H1 (cell line): ENCODE measurements at regions of chr14 and their contacts with region 1.

Region 1: DNA sequence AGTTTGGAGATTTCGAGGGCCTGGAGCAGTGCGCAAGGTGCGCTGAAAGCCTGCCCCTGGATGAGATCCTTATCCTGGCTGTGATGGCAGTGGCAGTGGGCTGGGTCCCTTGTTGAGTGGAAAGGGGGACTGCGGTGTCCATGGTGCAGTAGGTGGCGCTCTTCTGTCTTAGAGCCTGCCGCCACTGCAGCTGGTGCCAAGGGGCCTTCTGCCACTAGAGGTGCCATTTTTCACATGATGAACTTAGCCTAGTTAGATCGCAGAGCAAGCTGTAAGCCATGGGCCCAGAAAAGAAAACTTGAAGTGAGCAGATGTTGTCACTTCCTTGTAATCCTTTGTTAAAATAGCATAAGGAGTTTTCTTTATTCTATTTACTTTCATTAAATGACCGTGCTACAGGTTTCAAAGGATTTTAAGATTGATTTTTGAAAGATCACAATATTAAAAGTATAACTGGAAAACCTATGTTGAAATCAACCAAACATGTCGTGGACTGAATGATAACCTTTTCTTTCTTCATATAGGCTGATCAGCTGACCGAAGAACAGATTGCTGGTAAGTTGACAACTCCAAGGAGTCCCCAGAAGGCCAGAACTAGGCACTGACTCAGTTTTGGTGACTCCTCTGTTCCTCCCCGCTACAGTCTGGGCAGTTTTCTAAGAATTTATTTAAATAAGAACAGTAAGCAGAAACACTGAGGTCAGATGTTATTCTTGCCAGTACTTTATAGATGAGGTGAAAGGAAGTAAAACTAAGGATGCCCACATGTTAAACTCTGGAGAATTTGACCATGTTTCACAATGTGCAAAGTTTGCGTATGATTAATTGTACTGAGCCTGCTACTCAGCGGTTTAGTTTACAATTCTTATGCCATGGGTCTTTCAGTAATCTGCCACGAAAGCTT is 3.0 kb downstream of the CALM1 start:
- DNase-seq: peak; percentile 68 to 83
- H3K4me3 ChIP-seq: peak overlapping the region in 1 of 4 experiments; percentile 88; a peak in 2 of 8 replicates
- H3K27ac ChIP-seq: no peak overlapping the region
- H3K4me1 ChIP-seq: peaks cover 0 to 3% (median 1%) of the 10 kb centered on the region in 4 experiments; a peak in 2 of 7 replicates
- H3K27me3 ChIP-seq: no peaks in the 10 kb centered on the region
- CTCF ChIP-seq: peak; percentile 99 to 100 (median 100)
- EP300 ChIP-seq: peak in 1 of 2 experiments; percentile 54; a peak in 1 of 3 replicates
- POLR2A ChIP-seq: no peak
- RAD21 ChIP-seq: peak; percentile 96

Region 2: GRCh38 chr14:90256354-90257131 is 143.2 kb before region 1 on chr14 and contains the start of gene PSMC1:
- CTCF ChIA-PET with region 1: no interaction called
- POLR2A ChIA-PET with region 1: no interaction called
- DNase-seq: peak; percentile 71 to 78
- H3K4me3 ChIP-seq: peak within 1 kb of the TSS; percentile 62 to 94 (median 78)
- H3K27ac ChIP-seq: peak within 1 kb of the TSS; percentile 75; the same call in 1 of the 2 replicates
- H3K4me1 ChIP-seq: peaks cover 0 to 3% (median 0%) of the 10 kb centered on the region in 4 experiments; a peak in 1 of 7 replicates
- H3K27me3 ChIP-seq: peaks cover 0 to 6% (median 3%) of the 10 kb centered on the region in 4 experiments; a peak in 4 of 7 replicates
- CTCF ChIP-seq: no peak
- EP300 ChIP-seq: peak in 1 of 2 experiments; percentile 24; a peak in 1 of 3 replicates
- POLR2A ChIP-seq: peak; percentile 82 to 91
- RAD21 ChIP-seq: no peak; a peak in 1 of 4 replicates
- total RNA-seq, gene PSMC1: 99.6 and 104 TPM in 2 replicates

Region 3: DNA sequence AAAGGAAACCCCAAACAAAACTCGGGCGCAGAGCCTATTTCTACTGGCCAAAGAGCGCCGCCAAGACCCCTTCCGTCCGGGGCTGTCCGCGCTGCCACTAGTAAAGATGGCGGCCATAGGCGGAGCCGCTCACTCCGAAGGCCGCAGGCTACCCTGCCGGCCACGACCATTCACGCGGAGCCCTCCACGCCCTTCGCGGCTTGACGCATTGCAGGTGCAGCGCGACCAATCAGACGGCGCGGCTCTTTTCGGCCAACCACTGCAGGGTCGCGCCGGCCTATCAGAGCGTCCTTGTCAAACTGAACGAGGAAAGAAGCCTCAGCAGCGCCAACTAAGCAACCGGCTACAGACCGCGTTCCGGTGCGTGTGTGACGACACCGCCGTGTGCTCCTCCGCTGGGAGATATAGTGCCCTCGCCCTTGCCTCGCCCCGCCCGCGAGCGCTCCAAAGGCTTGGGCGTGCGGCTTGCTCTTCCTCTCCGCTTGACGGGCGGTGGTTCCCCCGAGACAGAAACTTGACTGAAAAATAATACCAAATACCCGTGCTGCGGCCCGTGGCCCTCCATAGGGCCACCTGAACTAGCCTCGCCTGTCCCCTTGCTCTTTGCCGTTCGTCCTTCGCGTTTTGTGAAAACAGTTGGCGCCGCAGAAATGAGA is 16.6 kb before region 1 on chr14:
- CTCF ChIA-PET with region 1: interaction called, 8 read pairs
- POLR2A ChIA-PET with region 1: interaction called, 104 read pairs
- DNase-seq: peak; percentile 95 to 99
- H3K4me3 ChIP-seq: peak overlapping the region; percentile 60 to 78 (median 74)
- H3K27ac ChIP-seq: peak overlapping the region; percentile 95
- H3K4me1 ChIP-seq: peaks cover 3 to 17% (median 3%) of the 10 kb centered on the region in 4 experiments; a peak in 6 of 7 replicates
- H3K27me3 ChIP-seq: peaks cover 0 to 3% (median 0%) of the 10 kb centered on the region in 4 experiments; a peak in 1 of 7 replicates
- CTCF ChIP-seq: 0 out of 4 replicates have a peak, but pooled peaks of 1 of the 3 experiments have one; percentile 9
- EP300 ChIP-seq: peak in 1 of 2 experiments; percentile 42; a peak in 1 of 3 replicates
- POLR2A ChIP-seq: peak; percentile 59 to 91
- RAD21 ChIP-seq: peak in 1 of 2 experiments; percentile 6; a peak in 2 of 4 replicates

Region 4: DNA sequence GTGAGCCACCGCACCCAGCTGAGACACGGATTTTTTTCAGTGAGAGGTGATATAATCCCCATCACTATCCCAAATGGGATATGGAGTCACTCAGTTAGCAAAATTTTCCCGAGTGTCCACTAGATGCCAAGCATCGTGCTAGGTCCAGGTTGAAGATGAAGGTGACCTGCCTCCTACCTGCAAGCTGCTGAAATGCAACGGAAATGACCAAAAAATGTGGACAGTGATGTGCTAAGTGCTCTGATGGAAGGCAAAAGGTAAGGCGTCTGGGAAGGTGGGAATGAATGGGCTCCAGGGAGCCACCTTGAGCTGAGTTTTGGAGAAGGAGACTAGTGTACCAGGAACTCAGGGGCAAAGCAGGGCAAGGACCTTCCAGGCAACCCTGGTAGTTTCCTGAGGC is 61.6 kb after region 1 on chr14:
- CTCF ChIA-PET with region 1: interaction called, 18 read pairs
- POLR2A ChIA-PET with region 1: no interaction called
- DNase-seq: no peak
- H3K4me3 ChIP-seq: no peak overlapping the region
- H3K27ac ChIP-seq: no peak overlapping the region
- H3K4me1 ChIP-seq: no peaks in the 10 kb centered on the region
- H3K27me3 ChIP-seq: no peaks in the 10 kb centered on the region
- CTCF ChIP-seq: peak; percentile 28 to 61 (median 55)
- EP300 ChIP-seq: no peak
- POLR2A ChIP-seq: no peak
- RAD21 ChIP-seq: peak in 1 of 2 experiments; percentile 48; a peak in 2 of 4 replicates

Region 5: DNA sequence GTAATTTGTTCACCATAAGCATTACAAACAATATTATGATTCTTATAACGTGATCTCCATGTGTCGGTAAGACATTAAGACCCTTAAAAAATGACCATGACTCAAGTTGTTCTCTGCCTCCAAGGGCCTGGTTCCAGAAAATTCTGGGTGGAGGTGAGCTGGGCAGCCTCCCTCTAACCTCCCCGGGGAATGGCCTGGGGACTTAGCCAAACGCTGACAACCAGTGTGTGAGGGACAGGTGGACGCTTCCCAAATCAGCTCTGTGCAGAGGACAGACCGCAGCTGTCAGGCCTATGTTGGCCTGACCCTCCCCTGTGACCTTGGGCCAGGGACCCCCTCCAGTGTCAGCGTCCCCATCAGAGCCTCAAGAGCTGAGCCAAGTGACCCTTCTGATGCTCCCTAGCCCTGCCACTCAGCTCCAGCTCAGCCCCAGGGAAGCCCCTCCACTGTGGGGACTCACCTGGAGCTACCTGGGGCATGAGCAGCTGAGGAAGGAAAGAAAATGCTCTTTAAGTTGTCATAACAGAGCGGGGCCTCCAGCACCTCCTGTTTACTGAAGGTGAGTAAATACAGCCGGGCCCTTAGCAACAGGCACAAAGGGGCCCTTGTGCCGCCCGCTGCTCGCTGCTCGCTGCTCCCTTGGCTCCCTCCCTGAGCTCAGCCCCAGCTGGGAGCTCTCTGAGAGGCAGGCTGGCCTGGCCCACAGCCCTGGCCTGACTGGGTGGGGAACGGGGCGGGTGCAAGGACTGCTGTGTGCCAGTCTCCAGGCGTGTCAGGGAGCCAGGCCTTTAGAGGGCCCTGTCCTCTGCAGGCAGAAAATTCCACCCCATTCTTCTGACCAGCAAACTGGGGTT is 113.6 kb after region 1 on chr14:
- CTCF ChIA-PET with region 1: interaction called, 15 read pairs
- POLR2A ChIA-PET with region 1: interaction called, 8 read pairs
- DNase-seq: no peak
- H3K4me3 ChIP-seq: no peak overlapping the region
- H3K27ac ChIP-seq: peak overlapping the region; percentile 71
- H3K4me1 ChIP-seq: peaks cover 4 to 42% (median 34%) of the 10 kb centered on the region in 4 experiments
- H3K27me3 ChIP-seq: no peaks in the 10 kb centered on the region; a peak in 1 of 7 replicates
- CTCF ChIP-seq: no peak
- EP300 ChIP-seq: peak; percentile 43 to 94; a peak in 2 of 3 replicates
- POLR2A ChIP-seq: no peak; a peak in 1 of 3 replicates
- RAD21 ChIP-seq: peak in 1 of 2 experiments; percentile 11; a peak in 1 of 4 replicates